ENCODE measurements at regions of chr1 and their contacts with region 1.

Region 1: GRCh38 chr1:216034504-216034903 is 388.7 kb downstream of the USH2A start:
- DNase-seq: peak; percentile 50 to 54
- H3K4me3 ChIP-seq: no peak overlapping the region
- H3K4me3 Mint-ChIP-seq: no peak overlapping the region
- H3K27ac Mint-ChIP-seq: no peak overlapping the region
- H3K4me1 ChIP-seq: no peaks in the 10 kb centered on the region
- H3K4me1 Mint-ChIP-seq: no peaks in the 10 kb centered on the region
- H3K27me3 ChIP-seq: no peaks in the 10 kb centered on the region; the same call in 1 of the 2 replicates
- H3K27me3 Mint-ChIP-seq: no peaks in the 10 kb centered on the region
- CTCF ChIP-seq: peak; percentile 53 to 60

Region 2: GRCh38 chr1:215824245-215824644 is 210.3 kb before region 1 on chr1:
- CTCF ChIA-PET with region 1: no interaction called
- POLR2A ChIA-PET with region 1: no interaction called
- intact Hi-C with region 1: loop called (anchors 1 kb)
- DNase-seq: peak in 1 of 2 experiments; percentile 24
- H3K4me3 ChIP-seq: no peak overlapping the region
- H3K4me3 Mint-ChIP-seq: no peak overlapping the region
- H3K27ac Mint-ChIP-seq: no peak overlapping the region
- H3K4me1 ChIP-seq: no peaks in the 10 kb centered on the region
- H3K4me1 Mint-ChIP-seq: no peaks in the 10 kb centered on the region
- H3K27me3 ChIP-seq: no peaks in the 10 kb centered on the region
- H3K27me3 Mint-ChIP-seq: no peaks in the 10 kb centered on the region
- CTCF ChIP-seq: peak; percentile 32 to 73

Region 3: GRCh38 chr1:215863796-215864195 is 170.7 kb before region 1 on chr1:
- CTCF ChIA-PET with region 1: no interaction called
- POLR2A ChIA-PET with region 1: no interaction called
- intact Hi-C with region 1: no loop called
- DNase-seq: no peak
- H3K4me3 ChIP-seq: no peak overlapping the region
- H3K4me3 Mint-ChIP-seq: no peak overlapping the region
- H3K27ac Mint-ChIP-seq: peak overlapping the region; percentile 0
- H3K4me1 ChIP-seq: peaks cover 52% of the 10 kb centered on the region
- H3K4me1 Mint-ChIP-seq: peaks cover 24% of the 10 kb centered on the region
- H3K27me3 ChIP-seq: no peaks in the 10 kb centered on the region
- H3K27me3 Mint-ChIP-seq: no peaks in the 10 kb centered on the region
- CTCF ChIP-seq: no peak

Region 4: GRCh38 chr1:215888159-215888558 is 146.3 kb before region 1 on chr1:
- CTCF ChIA-PET with region 1: no interaction called
- POLR2A ChIA-PET with region 1: no interaction called
- intact Hi-C with region 1: loop called (anchors 5 kb)
- DNase-seq: peak in 1 of 2 experiments; percentile 28
- H3K4me3 ChIP-seq: no peak overlapping the region
- H3K4me3 Mint-ChIP-seq: no peak overlapping the region
- H3K27ac Mint-ChIP-seq: no peak overlapping the region
- H3K4me1 ChIP-seq: 0 out of 2 replicates have a peak, but pooled peaks cover 7% of the 10 kb centered on the region
- H3K4me1 Mint-ChIP-seq: peaks cover 7% of the 10 kb centered on the region
- H3K27me3 ChIP-seq: no peaks in the 10 kb centered on the region
- H3K27me3 Mint-ChIP-seq: no peaks in the 10 kb centered on the region
- CTCF ChIP-seq: no peak

Region 5: GRCh38 chr1:216095400-216095799 is 60.9 kb after region 1 on chr1:
- CTCF ChIA-PET with region 1: no interaction called
- POLR2A ChIA-PET with region 1: no interaction called
- intact Hi-C with region 1: no loop called
- DNase-seq: no peak
- H3K4me3 ChIP-seq: no peak overlapping the region
- H3K4me3 Mint-ChIP-seq: no peak overlapping the region
- H3K27ac Mint-ChIP-seq: no peak overlapping the region
- H3K4me1 ChIP-seq: 0 out of 2 replicates have a peak, but pooled peaks cover 6% of the 10 kb centered on the region
- H3K4me1 Mint-ChIP-seq: no peaks in the 10 kb centered on the region
- H3K27me3 ChIP-seq: no peaks in the 10 kb centered on the region
- H3K27me3 Mint-ChIP-seq: no peaks in the 10 kb centered on the region
- CTCF ChIP-seq: no peak

Region 6: GRCh38 chr1:216119602-216120001 is 85.1 kb after region 1 on chr1:
- CTCF ChIA-PET with region 1: no interaction called
- POLR2A ChIA-PET with region 1: no interaction called
- intact Hi-C with region 1: loop called (anchors 1 kb)
- DNase-seq: peak in 1 of 2 experiments; percentile 36
- H3K4me3 ChIP-seq: no peak overlapping the region
- H3K4me3 Mint-ChIP-seq: no peak overlapping the region
- H3K27ac Mint-ChIP-seq: no peak overlapping the region
- H3K4me1 ChIP-seq: no peaks in the 10 kb centered on the region
- H3K4me1 Mint-ChIP-seq: no peaks in the 10 kb centered on the region
- H3K27me3 ChIP-seq: no peaks in the 10 kb centered on the region
- H3K27me3 Mint-ChIP-seq: no peaks in the 10 kb centered on the region
- CTCF ChIP-seq: peak; percentile 53 to 61

Region 7: DNA sequence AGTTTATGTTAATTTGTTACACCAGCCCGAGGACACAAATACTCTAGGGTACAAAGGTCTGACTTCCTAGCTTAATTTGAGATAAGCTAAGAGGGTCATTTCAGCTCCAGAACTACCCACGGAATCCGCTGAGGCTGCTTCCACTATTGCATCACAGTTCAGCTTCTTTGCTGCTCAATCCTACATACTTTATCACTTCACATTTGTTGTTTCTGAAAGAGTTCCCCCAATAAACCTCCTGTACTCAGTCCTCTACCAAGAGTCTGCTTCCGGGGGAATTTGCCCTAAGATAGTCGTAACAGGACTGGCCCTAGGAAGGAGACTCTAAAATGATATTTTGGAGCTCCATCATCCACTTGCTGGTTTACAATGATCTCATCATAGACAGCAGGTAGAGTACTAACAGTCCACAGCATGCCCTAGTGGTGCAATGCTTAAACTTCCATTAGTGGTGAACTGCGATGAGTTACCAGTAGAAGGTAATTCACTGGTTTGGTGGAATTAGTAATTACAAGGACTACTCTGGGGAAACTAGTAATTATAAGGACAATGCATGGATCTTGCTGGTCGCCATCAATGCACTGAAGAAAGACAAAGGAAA is 159.4 kb after region 1 on chr1:
- CTCF ChIA-PET with region 1: interaction called, 3 read pairs
- POLR2A ChIA-PET with region 1: no interaction called
- intact Hi-C with region 1: loop called (anchors 1 kb)
- DNase-seq: peak; percentile 22 to 32
- H3K4me3 ChIP-seq: no peak overlapping the region
- H3K4me3 Mint-ChIP-seq: peak overlapping the region; percentile 27
- H3K27ac Mint-ChIP-seq: no peak overlapping the region
- H3K4me1 ChIP-seq: peaks cover 11% of the 10 kb centered on the region; the same call in 1 of the 2 replicates
- H3K4me1 Mint-ChIP-seq: peaks cover 7% of the 10 kb centered on the region
- H3K27me3 ChIP-seq: no peaks in the 10 kb centered on the region
- H3K27me3 Mint-ChIP-seq: no peaks in the 10 kb centered on the region
- CTCF ChIP-seq: peak; percentile 40 to 41

Region 8: GRCh38 chr1:216205176-216205575 is 170.7 kb after region 1 on chr1:
- CTCF ChIA-PET with region 1: no interaction called
- POLR2A ChIA-PET with region 1: no interaction called
- intact Hi-C with region 1: loop called (anchors 5 kb)
- DNase-seq: no peak
- H3K4me3 ChIP-seq: no peak overlapping the region
- H3K4me3 Mint-ChIP-seq: no peak overlapping the region
- H3K27ac Mint-ChIP-seq: no peak overlapping the region
- H3K4me1 ChIP-seq: peaks cover 8% of the 10 kb centered on the region; the same call in 1 of the 2 replicates
- H3K4me1 Mint-ChIP-seq: peaks cover 15% of the 10 kb centered on the region
- H3K27me3 ChIP-seq: no peaks in the 10 kb centered on the region
- H3K27me3 Mint-ChIP-seq: no peaks in the 10 kb centered on the region
- CTCF ChIP-seq: no peak

Region 9: DNA sequence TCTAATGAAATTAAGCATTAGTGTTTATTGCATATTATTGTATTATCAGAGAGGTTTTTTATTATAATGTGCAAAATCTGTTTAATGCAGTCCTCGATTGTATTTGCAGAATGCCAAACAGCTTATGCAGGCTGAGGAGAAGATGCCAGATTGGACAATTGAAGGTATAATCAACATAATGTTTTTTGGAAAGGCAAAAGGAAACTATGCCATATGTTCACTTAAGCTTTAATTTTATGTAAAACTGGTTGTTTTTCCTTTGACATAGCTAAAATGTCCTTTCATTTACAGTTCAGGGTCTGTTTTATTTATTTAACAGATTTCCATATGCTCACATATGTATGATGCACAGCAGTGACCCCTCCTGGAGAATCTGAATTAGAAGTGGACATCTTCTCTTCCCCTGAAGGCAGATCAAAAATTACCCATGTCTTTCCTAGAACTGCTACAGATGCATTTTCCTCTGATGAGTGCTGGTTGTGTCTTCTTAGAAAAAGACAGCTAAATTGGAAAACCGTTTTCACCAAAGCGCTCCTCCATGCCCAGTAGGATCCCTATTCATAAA is 532.2 kb after region 1 on chr1:
- CTCF ChIA-PET with region 1: no interaction called
- POLR2A ChIA-PET with region 1: no interaction called
- intact Hi-C with region 1: loop called (anchors 1 kb)
- DNase-seq: peak in 1 of 2 experiments; percentile 14
- H3K4me3 ChIP-seq: no peak overlapping the region
- H3K4me3 Mint-ChIP-seq: no peak overlapping the region
- H3K27ac Mint-ChIP-seq: no peak overlapping the region
- H3K4me1 ChIP-seq: no peaks in the 10 kb centered on the region
- H3K4me1 Mint-ChIP-seq: no peaks in the 10 kb centered on the region
- H3K27me3 ChIP-seq: no peaks in the 10 kb centered on the region
- H3K27me3 Mint-ChIP-seq: no peaks in the 10 kb centered on the region
- CTCF ChIP-seq: peak; percentile 39 to 42